Mammary epithelial cell (primary cell): ENCODE measurements at regions of chr10 and their contacts with region 1.

Region 1: GRCh38 chr10:84429926-84430520 is 101.6 kb downstream of the CCSER2 start:
- DNase-seq: peak; percentile 61
- H3K4me3 ChIP-seq: no peak overlapping the region
- H3K27ac ChIP-seq: no peak overlapping the region
- H3K4me1 ChIP-seq: peaks cover 16% of the 10 kb centered on the region
- H3K27me3 ChIP-seq: no peaks in the 10 kb centered on the region
- CTCF ChIP-seq: peak; percentile 85 to 93

Region 2: DNA sequence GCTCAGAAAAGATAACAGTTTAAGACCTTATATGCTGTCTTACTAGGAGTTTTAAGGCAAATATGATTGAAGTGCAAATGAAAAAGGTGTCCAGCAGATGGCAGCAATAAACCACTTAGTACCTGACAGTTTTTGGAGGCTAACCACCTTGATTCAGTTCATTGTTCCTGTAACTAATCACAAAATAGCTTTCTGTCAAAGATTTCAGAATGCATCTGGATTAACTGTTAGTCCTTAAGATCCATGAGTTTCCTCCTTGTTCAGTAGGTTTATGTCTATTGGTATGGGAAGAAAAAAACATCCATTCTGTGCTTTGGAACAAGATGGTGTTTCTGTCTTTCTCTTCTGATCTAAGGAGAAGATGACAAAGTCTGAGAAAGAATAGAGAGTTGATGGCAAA is 55.0 kb before region 1 on chr10:
- CTCF ChIA-PET with region 1: no interaction called
- dilution Hi-C with region 1: no loop called
- in situ Hi-C with region 1: no loop called
- intact Hi-C with region 1: loop called (anchors 1 kb)
- DNase-seq: peak; percentile 51
- H3K4me3 ChIP-seq: no peak overlapping the region
- H3K27ac ChIP-seq: no peak overlapping the region
- H3K4me1 ChIP-seq: no peaks in the 10 kb centered on the region
- H3K27me3 ChIP-seq: no peaks in the 10 kb centered on the region
- CTCF ChIP-seq: peak; percentile 71 to 75

Region 3: GRCh38 chr10:84452003-84452402 is 22.0 kb after region 1 on chr10:
- CTCF ChIA-PET with region 1: no interaction called
- dilution Hi-C with region 1: no loop called
- in situ Hi-C with region 1: no loop called
- intact Hi-C with region 1: loop called (anchors 1 kb)
- DNase-seq: peak; percentile 37
- H3K4me3 ChIP-seq: no peak overlapping the region
- H3K27ac ChIP-seq: no peak overlapping the region
- H3K4me1 ChIP-seq: no peaks in the 10 kb centered on the region
- H3K27me3 ChIP-seq: no peaks in the 10 kb centered on the region
- CTCF ChIP-seq: no peak

Region 4: DNA sequence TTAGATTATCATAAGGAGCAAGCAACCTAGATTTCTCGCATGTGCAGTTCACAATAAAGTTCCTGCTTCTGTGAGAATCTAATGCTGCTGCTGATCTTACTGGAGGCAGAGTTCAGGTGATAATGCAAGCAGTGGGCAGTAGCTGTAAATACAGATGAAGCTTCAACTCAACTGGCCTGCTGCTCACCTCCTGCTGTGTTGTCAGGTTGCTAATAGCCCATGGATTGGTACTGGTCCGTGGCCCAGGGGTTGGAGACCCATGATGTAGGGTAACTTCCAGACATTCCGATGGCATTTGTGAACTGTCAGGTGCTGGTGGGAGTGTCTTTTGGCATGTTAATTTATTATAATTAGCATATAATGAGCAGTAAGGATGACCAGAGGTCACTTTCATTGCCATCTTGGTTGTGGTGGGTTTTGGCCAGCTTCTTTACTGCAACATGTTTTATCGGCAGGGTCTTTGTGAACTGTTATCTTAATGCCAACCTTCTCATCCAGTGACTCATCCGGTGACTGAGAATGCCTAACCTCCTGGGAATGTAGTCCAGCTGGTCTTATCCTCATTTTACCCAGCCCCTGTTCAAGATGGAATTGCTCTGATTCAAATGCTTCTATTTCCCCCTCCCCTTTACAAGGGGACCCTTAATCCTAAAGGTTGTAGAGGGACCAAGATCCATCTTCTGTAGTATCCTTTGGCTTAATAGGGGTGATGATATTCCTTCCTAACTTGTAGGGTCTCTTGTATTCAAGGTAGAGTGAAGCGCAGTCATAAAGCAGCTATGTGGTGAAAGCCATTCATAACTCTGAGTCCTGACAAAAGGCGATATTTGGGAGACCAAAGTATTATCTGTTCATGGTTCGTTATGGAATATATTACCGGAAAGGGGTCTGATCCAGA is 64.2 kb after region 1 on chr10:
- CTCF ChIA-PET with region 1: no interaction called
- dilution Hi-C with region 1: loop called (anchors 5 kb)
- in situ Hi-C with region 1: no loop called
- intact Hi-C with region 1: no loop called
- DNase-seq: peak; percentile 75
- H3K4me3 ChIP-seq: peak overlapping the region in 2 of 3 experiments; percentile 2 to 21
- H3K27ac ChIP-seq: peak overlapping the region; percentile 50
- H3K4me1 ChIP-seq: peaks cover 23% of the 10 kb centered on the region
- H3K27me3 ChIP-seq: no peaks in the 10 kb centered on the region
- CTCF ChIP-seq: no peak